HepG2 (cell line): ENCODE measurements at regions of chr1 and their contacts with region 1.

Region 1: GRCh38 chr1:35192853-35193664 is at the start of gene SFPQ:
- DNase-seq: peak; percentile 97
- ATAC-seq: peak; percentile 93
- H3K4me3 ChIP-seq: peak within 1 kb of the TSS; percentile 94 to 100 (median 99)
- H3K27ac ChIP-seq: peak within 1 kb of the TSS; percentile 88
- H3K4me1 ChIP-seq: peaks cover 52% of the 10 kb centered on the region
- H3K27me3 ChIP-seq: no peaks in the 10 kb centered on the region; a peak in 1 of 5 replicates
- CTCF ChIP-seq: peak; percentile 19; the same call in 1 of the 2 replicates
- EP300 ChIP-seq: no peak
- POLR2A ChIP-seq: peak; percentile 100
- RAD21 ChIP-seq: no peak
- total RNA-seq, gene SFPQ: 260 and 292 TPM in 2 replicates

Region 2: DNA sequence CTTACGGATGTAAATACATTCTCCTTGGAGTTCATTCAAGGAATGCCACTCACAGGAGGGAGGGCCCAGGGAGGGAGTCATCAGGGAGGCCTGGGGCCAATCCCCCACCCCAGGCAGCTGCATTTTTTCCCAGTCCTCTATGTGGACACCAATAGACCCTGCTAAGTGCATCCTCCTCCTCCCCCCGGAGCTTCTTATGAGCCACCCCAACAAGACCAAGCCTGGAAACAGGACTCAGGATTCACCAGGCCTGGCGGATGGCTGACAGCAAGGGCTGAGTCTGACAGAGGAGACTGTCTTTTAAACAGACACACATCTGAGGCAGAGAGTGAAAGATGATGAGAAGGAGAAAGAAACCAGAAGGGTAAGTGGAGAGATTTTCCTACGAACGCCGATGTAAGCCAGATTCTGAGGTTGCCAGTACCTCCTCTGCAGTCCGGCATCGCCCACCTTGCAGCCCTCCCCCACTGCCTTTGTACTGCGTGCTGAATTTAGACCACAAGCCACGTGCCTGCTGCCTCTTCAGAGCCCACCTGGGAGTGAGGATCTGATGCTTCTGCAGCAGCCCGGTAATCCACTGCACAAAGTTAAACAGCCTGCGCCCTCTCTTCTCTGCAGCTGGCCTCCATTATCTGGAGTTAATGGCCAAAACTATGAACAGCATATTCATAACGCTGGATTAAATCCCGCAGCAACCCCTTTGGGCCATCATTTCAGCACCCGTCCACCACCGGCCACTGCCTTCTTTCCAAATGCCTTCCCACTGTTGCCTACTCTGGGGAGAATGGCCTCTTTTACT is 17.5 kb after region 1 on chr1:
- CTCF ChIA-PET with region 1: no interaction called
- POLR2A ChIA-PET with region 1: no interaction called
- in situ Hi-C with region 1: no loop called
- intact Hi-C with region 1: no loop called
- DNase-seq: no peak
- ATAC-seq: no peak
- H3K4me3 ChIP-seq: no peak overlapping the region
- H3K27ac ChIP-seq: no peak overlapping the region
- H3K4me1 ChIP-seq: no peaks in the 10 kb centered on the region; the same call in 1 of the 2 replicates
- H3K27me3 ChIP-seq: no peaks in the 10 kb centered on the region
- CTCF ChIP-seq: no peak
- EP300 ChIP-seq: no peak
- POLR2A ChIP-seq: no peak
- RAD21 ChIP-seq: no peak

Region 3: GRCh38 chr1:35268282-35269200 is 75.5 kb after region 1 on chr1 and contains the start of gene ZMYM4:
- CTCF ChIA-PET with region 1: no interaction called
- POLR2A ChIA-PET with region 1: interaction called, 8 read pairs
- in situ Hi-C with region 1: no loop called
- intact Hi-C with region 1: loop called (anchors 2 kb)
- DNase-seq: peak; percentile 96
- ATAC-seq: peak; percentile 96
- H3K4me3 ChIP-seq: peak within 1 kb of the TSS; percentile 88 to 95 (median 93)
- H3K27ac ChIP-seq: peak within 1 kb of the TSS; percentile 83
- H3K4me1 ChIP-seq: peaks cover 61% of the 10 kb centered on the region
- H3K27me3 ChIP-seq: no peaks in the 10 kb centered on the region; a peak in 1 of 5 replicates
- CTCF ChIP-seq: peak; percentile 22; the same call in 1 of the 2 replicates
- EP300 ChIP-seq: no peak
- POLR2A ChIP-seq: peak; percentile 39 to 47; a peak in 3 of 4 replicates
- RAD21 ChIP-seq: no peak
- total RNA-seq, gene ZMYM4: 37.6 and 51.6 TPM in 2 replicates

Region 4: GRCh38 chr1:35287807-35288640 is 95.0 kb after region 1 on chr1:
- CTCF ChIA-PET with region 1: no interaction called
- POLR2A ChIA-PET with region 1: no interaction called
- in situ Hi-C with region 1: loop called (anchors 10 kb)
- intact Hi-C with region 1: no loop called
- DNase-seq: no peak
- ATAC-seq: no peak
- H3K4me3 ChIP-seq: no peak overlapping the region
- H3K27ac ChIP-seq: no peak overlapping the region
- H3K4me1 ChIP-seq: peaks cover 13% of the 10 kb centered on the region
- H3K27me3 ChIP-seq: no peaks in the 10 kb centered on the region
- CTCF ChIP-seq: no peak
- EP300 ChIP-seq: no peak
- POLR2A ChIP-seq: no peak
- RAD21 ChIP-seq: no peak

Region 5: GRCh38 chr1:35899941-35900340 is 706.9 kb after region 1 on chr1:
- CTCF ChIA-PET with region 1: no interaction called
- POLR2A ChIA-PET with region 1: no interaction called
- in situ Hi-C with region 1: no loop called
- intact Hi-C with region 1: no loop called
- DNase-seq: no peak
- ATAC-seq: no peak
- H3K4me3 ChIP-seq: no peak overlapping the region
- H3K27ac ChIP-seq: no peak overlapping the region
- H3K4me1 ChIP-seq: peaks cover 9% of the 10 kb centered on the region
- H3K27me3 ChIP-seq: no peaks in the 10 kb centered on the region
- CTCF ChIP-seq: peak; percentile 30
- EP300 ChIP-seq: no peak
- POLR2A ChIP-seq: no peak
- RAD21 ChIP-seq: no peak